Activated CD4-positive, alpha-beta T cell treated with anti-CD3 and anti-CD28 coated beads for 36 hours (primary cell): ENCODE measurements at regions of chr15 and their contacts with region 1.

Region 1: GRCh38 chr15:55993111-55993803 is at the start of gene NEDD4:
- DNase-seq: peak; percentile 86
- ATAC-seq: peak; percentile 91
- H3K4me3 Mint-ChIP-seq: peak within 1 kb of the TSS; percentile 84
- H3K27ac Mint-ChIP-seq: peak within 1 kb of the TSS; percentile 79
- H3K4me1 Mint-ChIP-seq: peaks cover 22% of the 10 kb centered on the region
- H3K27me3 Mint-ChIP-seq: no peaks in the 10 kb centered on the region
- total RNA-seq, gene NEDD4: 22.4 to 23.3 TPM

Region 2: DNA sequence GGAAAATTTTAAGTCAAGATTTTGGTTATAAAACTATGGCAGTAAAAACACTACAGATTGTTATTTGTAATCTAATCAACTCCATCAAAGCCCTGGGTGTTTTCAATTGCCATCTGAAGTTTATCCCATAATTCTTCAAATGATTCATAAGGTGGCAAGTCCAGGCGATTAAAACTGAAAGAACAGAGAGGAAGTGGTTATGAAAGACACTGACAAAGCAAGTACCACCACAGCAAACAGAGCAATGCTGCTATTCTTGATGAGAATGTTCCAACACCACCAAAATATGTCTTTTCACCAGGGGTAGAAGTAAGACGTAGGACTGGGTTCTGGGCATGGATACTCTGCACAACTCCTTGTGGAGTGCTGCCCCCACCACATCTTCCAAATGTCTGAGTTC is 163.4 kb before region 1 on chr15:
- CTCF ChIA-PET with region 1: no interaction called
- POLR2A ChIA-PET with region 1: no interaction called
- intact Hi-C with region 1: no loop called
- DNase-seq: peak; percentile 9
- ATAC-seq: peak; percentile 91
- H3K4me3 Mint-ChIP-seq: no peak overlapping the region
- H3K27ac Mint-ChIP-seq: peak overlapping the region; percentile 62
- H3K4me1 Mint-ChIP-seq: peaks cover 14% of the 10 kb centered on the region
- H3K27me3 Mint-ChIP-seq: no peaks in the 10 kb centered on the region

Region 3: DNA sequence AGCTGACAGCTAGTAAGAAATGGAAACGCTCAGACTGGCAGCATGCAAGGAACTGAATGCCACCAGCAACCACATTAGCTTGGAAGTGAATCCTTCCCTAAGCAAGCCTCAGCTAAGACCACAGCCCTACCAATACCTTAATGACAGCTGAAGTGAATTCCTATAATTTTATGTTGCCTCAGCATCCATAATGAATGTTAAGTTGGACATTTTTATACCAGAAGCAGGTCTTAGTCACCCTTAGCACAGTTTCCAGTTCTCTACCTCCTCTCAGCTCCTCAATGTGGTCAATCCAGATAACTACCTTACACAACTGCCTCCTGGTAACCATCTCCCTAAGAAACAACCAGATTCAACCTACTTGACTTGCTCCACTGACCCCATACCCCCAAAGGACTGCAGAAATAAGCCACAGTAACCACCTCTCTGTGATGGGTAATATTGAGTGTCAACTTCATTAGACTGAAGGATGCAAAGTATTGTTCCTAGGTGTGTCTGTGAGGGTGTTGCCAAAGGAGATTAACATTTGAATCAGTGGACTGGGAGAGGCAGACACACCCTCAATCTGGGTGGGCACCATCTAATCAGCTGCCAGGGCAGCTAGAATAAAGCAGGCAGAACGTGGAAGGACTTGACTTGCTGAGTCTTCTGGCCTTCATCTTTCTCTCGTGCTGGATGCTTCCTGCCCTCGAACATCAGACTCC is 33.4 kb before region 1 on chr15:
- CTCF ChIA-PET with region 1: no interaction called
- POLR2A ChIA-PET with region 1: no interaction called
- intact Hi-C with region 1: no loop called
- DNase-seq: no peak
- ATAC-seq: no peak
- H3K4me3 Mint-ChIP-seq: no peak overlapping the region
- H3K27ac Mint-ChIP-seq: no peak overlapping the region
- H3K4me1 Mint-ChIP-seq: no peaks in the 10 kb centered on the region
- H3K27me3 Mint-ChIP-seq: no peaks in the 10 kb centered on the region

Region 4: GRCh38 chr15:56040081-56041035 is 47.1 kb after region 1 on chr15:
- CTCF ChIA-PET with region 1: no interaction called
- POLR2A ChIA-PET with region 1: no interaction called
- intact Hi-C with region 1: loop called in 1 of 2 experiments (anchors 2 kb)
- DNase-seq: peak; percentile 63
- ATAC-seq: peak; percentile 31
- H3K4me3 Mint-ChIP-seq: no peak overlapping the region
- H3K27ac Mint-ChIP-seq: peak overlapping the region; percentile 87
- H3K4me1 Mint-ChIP-seq: peaks cover 61% of the 10 kb centered on the region
- H3K27me3 Mint-ChIP-seq: no peaks in the 10 kb centered on the region